Caco-2 (cell line): ENCODE measurements at regions of chr17 and their contacts with region 1.

Region 1: GRCh38 chr17:32877164-32877764 is 340 bp upstream of the MYO1D start:
- DNase-seq: peak; percentile 91 to 98
- H3K4me3 ChIP-seq: peak overlapping the region; percentile 94
- H3K4me3 Mint-ChIP-seq: peak overlapping the region; percentile 94
- H3K27ac Mint-ChIP-seq: peak overlapping the region; percentile 68
- H3K4me1 ChIP-seq: peaks cover 22% of the 10 kb centered on the region
- H3K4me1 Mint-ChIP-seq: peaks cover 23% of the 10 kb centered on the region
- H3K27me3 ChIP-seq: no peaks in the 10 kb centered on the region
- H3K27me3 Mint-ChIP-seq: no peaks in the 10 kb centered on the region
- CTCF ChIP-seq: peak; percentile 97

Region 2: GRCh38 chr17:32783602-32784001 is 93.7 kb before region 1 on chr17:
- CTCF ChIA-PET with region 1: interaction called, 80 read pairs
- POLR2A ChIA-PET with region 1: interaction called, 5 read pairs
- intact Hi-C with region 1: loop called (anchors 1 kb)
- DNase-seq: peak in 1 of 2 experiments; percentile 53
- H3K4me3 ChIP-seq: no peak overlapping the region
- H3K4me3 Mint-ChIP-seq: no peak overlapping the region
- H3K27ac Mint-ChIP-seq: peak overlapping the region; percentile 68
- H3K4me1 ChIP-seq: peaks cover 13% of the 10 kb centered on the region
- H3K4me1 Mint-ChIP-seq: peaks cover 21% of the 10 kb centered on the region
- H3K27me3 ChIP-seq: no peaks in the 10 kb centered on the region
- H3K27me3 Mint-ChIP-seq: no peaks in the 10 kb centered on the region
- CTCF ChIP-seq: peak; percentile 64 to 82

Region 3: DNA sequence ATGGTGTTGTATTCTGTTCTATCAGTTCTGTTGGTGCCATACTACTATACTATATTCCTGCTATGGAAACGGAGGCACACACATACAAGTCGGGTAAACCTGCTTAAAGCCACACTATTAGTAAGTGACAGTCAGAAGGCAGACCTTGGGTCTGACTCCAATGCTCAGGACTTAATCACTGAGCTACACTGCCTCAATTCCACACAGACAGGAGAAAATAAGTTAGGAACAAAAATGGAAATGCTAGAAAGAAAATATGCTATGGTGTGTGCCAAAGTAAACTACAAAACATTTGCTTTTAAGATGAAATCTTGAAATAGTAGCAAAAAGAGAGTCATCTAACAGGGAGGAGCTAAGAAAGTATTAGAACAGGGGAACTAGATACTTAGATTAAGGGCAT is 48.4 kb before region 1 on chr17:
- CTCF ChIA-PET with region 1: interaction called, 21 read pairs
- POLR2A ChIA-PET with region 1: interaction called, 6 read pairs
- intact Hi-C with region 1: loop called (anchors 1 kb)
- DNase-seq: no peak
- H3K4me3 ChIP-seq: peak overlapping the region; percentile 38
- H3K4me3 Mint-ChIP-seq: peak overlapping the region; percentile 89
- H3K27ac Mint-ChIP-seq: peak overlapping the region; percentile 77
- H3K4me1 ChIP-seq: peaks cover 89% of the 10 kb centered on the region
- H3K4me1 Mint-ChIP-seq: peaks cover 61% of the 10 kb centered on the region
- H3K27me3 ChIP-seq: no peaks in the 10 kb centered on the region
- H3K27me3 Mint-ChIP-seq: no peaks in the 10 kb centered on the region
- CTCF ChIP-seq: no peak

Region 4: GRCh38 chr17:32896647-32897258 is 19.5 kb after region 1 on chr17:
- CTCF ChIA-PET with region 1: interaction called, 10 read pairs
- POLR2A ChIA-PET with region 1: no interaction called
- intact Hi-C with region 1: loop called (anchors 1 kb)
- DNase-seq: no peak
- H3K4me3 ChIP-seq: no peak overlapping the region
- H3K4me3 Mint-ChIP-seq: no peak overlapping the region
- H3K27ac Mint-ChIP-seq: peak overlapping the region; percentile 2
- H3K4me1 ChIP-seq: peaks cover 38% of the 10 kb centered on the region
- H3K4me1 Mint-ChIP-seq: peaks cover 32% of the 10 kb centered on the region
- H3K27me3 ChIP-seq: no peaks in the 10 kb centered on the region
- H3K27me3 Mint-ChIP-seq: no peaks in the 10 kb centered on the region
- CTCF ChIP-seq: no peak

Region 5: DNA sequence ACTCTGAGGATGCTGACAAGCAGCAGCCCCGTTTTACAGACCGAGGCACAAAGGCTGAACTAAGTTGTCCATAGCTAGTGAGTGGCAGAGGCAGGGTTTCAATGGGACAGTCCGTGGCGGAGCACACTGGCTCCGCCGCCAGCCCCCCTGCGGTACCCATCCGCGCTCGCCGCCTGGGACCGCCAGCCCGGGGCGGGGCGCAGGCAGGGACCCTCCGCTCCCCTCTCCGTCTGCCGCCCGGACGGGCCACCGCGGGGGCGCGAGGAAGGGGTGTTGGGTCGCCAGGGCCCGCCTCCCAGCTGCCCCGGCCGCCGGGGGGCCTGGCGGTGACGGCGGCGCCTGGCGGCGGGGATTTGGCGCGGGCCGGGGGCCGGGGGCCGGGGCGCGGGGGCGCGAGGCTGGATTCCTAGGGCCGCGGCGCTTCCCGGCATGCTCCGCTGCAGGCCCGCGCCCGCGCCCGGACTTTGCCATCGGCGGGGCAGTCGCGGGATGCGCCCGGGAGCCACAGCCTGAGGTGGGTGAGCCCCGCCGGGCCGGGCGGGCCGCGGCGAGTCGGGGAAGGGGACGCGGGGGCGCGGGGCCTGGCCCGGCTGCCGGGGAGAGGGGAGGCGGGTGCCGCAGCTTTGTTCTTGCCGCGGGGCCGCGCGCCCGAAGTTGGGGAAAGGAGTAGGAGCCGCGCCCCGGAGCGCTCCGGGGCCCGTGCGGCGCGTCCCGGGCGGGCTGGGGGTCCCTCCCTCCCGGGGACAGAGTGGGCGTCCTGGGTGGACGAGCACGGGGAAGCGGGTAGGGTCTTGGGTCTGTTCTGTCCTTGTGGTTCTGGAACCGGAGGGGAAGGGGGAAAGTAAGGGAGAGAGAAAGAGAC is 50.7 kb after region 1 on chr17 and contains the start of gene TMEM98:
- CTCF ChIA-PET with region 1: interaction called, 3 read pairs
- POLR2A ChIA-PET with region 1: no interaction called
- intact Hi-C with region 1: loop called (anchors 5 kb)
- DNase-seq: peak in 1 of 2 experiments; percentile 82
- H3K4me3 ChIP-seq: peak within 1 kb of the TSS; percentile 77
- H3K4me3 Mint-ChIP-seq: no peak within 1 kb of the TSS
- H3K27ac Mint-ChIP-seq: peak within 1 kb of the TSS; percentile 65
- H3K4me1 ChIP-seq: peaks cover 23% of the 10 kb centered on the region
- H3K4me1 Mint-ChIP-seq: no peaks in the 10 kb centered on the region
- H3K27me3 ChIP-seq: no peaks in the 10 kb centered on the region
- H3K27me3 Mint-ChIP-seq: no peaks in the 10 kb centered on the region
- CTCF ChIP-seq: no peak
- total RNA-seq, gene TMEM98: 189 and 229 TPM in 2 replicates